GM13977 (cell line): ENCODE measurements at regions of chr3 and their contacts with region 1.

Region 1: GRCh38 chr3:158420654-158421396 is 150.2 kb upstream of the MLF1 start:
- DNase-seq: peak; percentile 13
- CTCF ChIP-seq: no peak

Region 2: DNA sequence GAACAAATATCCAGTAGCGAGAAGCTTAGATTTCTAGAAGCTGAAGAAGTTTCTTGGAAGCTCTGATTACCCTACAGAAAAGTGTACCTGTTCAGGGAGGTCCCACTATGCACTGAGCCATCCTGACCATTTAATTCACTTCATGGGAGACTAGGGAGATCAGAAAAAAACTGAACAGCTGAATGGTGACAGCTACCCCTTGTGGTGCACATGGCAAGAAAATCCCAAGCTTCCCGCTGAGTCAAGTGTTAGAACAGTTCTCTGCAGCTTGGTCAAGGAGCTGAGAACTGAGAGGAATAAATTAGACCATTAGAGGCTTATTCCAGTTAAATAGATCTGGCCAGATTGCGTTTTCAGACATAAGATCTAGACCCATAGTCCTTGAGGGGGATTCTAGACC is 720.4 kb before region 1 on chr3:
- in situ Hi-C with region 1: no loop called
- DNase-seq: no peak
- CTCF ChIP-seq: no peak

Region 3: DNA sequence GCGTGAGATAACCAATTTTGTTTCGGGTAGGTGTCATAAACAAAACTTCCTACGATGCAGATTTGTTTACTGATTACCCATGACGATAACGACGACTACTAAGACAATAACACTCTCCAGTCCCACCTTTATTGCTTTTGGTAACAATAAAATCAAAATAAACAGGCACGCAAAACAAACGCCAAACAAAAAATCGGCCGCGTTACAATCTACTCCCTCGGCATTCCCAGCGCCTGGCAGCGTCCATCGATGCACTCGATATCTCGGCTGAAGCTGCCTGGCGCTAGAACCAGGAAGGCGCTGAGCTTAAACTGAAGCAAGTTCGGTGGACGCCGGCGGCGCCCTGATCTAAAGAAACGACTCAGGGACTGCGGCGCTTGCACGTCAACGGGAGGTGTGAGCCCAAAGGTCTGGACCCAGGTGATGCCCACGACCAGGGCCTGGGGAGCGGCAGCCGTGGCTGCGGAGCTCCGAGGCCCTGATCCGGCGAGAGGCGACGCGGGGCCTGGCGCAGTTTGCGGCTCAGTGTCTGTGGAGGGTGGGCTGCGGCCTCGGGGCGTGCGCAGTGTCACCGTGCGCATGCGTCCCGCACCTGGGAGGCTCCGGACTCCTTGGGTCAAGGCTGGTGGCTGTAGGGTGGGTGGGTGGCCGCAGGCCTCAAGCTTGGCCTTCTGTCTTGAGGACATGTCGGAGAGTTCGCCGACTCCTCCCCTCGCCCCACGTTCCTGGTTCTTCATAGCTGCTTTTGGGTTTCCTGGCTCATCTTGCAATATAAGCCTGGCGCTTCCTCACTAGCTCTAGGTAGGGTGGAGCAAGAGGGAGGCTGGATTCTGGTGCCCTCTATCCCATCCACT is 310.8 kb before region 1 on chr3 and contains the start of gene RSRC1:
- in situ Hi-C with region 1: loop called (anchors 25 kb)
- DNase-seq: peak; percentile 82
- CTCF ChIP-seq: peak; percentile 8

Region 4: DNA sequence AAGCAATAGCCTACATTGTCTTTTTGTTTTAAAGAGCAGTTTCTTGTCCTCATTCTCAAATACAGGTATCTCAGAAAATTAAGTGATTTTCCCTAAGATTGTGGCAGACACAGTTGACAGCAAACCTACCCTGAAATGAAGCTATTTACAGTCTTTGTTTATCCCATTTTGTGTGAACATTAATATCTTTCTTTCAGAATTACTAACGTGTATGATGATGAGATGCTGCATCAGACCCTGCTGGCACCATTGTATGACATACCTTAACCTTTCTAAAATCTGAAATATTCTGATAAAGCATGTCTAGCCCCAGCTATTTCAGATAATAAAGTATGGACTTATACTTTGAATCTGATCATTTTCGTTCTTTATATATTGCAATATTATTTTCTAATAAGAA is 125.1 kb before region 1 on chr3:
- in situ Hi-C with region 1: no loop called
- DNase-seq: no peak
- CTCF ChIP-seq: no peak